ENCODE measurements at regions of chr12 and their contacts with region 1.

Region 1: GRCh38 chr12:6278439-6279255 is 31.8 kb upstream of the PLEKHG6 start:
- DNase-seq: peak; percentile 85
- ATAC-seq: peak; percentile 65
- H3K4me3 Mint-ChIP-seq: peak overlapping the region; percentile 76
- H3K27ac Mint-ChIP-seq: no peak overlapping the region
- H3K4me1 Mint-ChIP-seq: peaks cover 59% of the 10 kb centered on the region
- H3K27me3 Mint-ChIP-seq: peaks cover 5% of the 10 kb centered on the region
- CTCF ChIP-seq: peak; percentile 99

Region 2: GRCh38 chr12:6067152-6067916 is 211.3 kb before region 1 on chr12:
- CTCF ChIA-PET with region 1: interaction called, 84 read pairs
- POLR2A ChIA-PET with region 1: no interaction called
- DNase-seq: peak; percentile 75
- ATAC-seq: peak; percentile 60
- H3K4me3 Mint-ChIP-seq: no peak overlapping the region
- H3K27ac Mint-ChIP-seq: no peak overlapping the region; the same call in 1 of the 2 replicates
- H3K4me1 Mint-ChIP-seq: peaks cover 18% of the 10 kb centered on the region
- H3K27me3 Mint-ChIP-seq: no peaks in the 10 kb centered on the region
- CTCF ChIP-seq: no peak

Region 3: DNA sequence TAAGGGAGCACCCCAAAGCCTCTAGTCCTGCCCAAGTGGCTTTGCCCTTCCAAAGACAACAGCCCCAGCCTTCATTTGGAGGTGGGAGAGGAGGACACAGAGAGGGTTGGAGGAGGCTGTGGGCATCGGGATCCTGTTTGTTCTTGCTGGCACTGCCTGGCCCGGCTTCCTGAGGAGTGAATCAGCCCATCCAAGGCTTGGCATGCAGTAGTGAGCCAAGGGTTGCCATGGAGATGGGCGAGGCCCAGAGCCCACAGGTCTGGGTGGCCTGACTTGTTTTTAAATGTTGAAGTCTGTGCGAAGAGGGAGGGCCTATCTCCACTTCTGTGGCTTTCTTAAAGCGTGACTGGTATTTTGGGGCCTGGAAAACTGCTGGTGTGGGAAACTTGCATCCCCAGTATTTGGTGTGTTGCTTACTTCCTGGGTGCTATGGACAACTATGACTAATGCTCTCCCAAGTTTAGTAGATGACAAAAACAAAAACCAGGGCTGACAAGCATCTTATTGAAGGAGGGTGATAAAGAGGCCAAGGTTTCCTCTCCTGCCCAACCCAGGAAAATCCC is 62.6 kb before region 1 on chr12:
- CTCF ChIA-PET with region 1: interaction called, 70 read pairs
- POLR2A ChIA-PET with region 1: interaction called, 3 read pairs
- DNase-seq: peak; percentile 47
- ATAC-seq: peak; percentile 11
- H3K4me3 Mint-ChIP-seq: peak overlapping the region; percentile 58
- H3K27ac Mint-ChIP-seq: peak overlapping the region; percentile 100
- H3K4me1 Mint-ChIP-seq: peaks cover 99% of the 10 kb centered on the region
- H3K27me3 Mint-ChIP-seq: no peaks in the 10 kb centered on the region
- CTCF ChIP-seq: no peak

Region 4: DNA sequence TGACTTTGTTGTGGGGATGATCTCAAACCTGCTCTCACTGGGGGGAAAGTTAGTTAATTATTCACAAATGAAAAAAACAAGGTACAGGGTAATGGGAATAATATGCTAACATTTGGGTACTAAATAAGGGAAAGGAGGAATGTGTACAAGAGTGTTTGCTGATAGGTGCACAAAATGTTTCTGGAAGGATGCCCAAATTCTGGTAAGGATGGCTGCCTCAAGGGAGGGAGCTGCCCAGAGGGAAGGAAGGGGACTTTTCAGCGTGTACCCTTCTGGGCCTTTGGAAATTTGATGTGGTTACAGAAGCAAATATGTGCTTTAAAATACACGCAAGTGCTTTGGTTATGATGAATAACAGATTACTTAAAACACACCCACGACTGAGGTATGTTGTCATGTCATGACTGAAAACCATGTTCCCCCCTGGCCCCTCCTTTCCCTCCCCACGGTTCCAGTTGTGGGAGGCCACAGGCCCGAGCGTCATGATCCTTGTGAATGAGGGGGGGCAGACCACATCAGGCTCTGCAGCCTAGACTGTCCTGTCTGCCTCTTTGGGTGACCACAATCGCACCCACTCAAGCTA is 11.4 kb before region 1 on chr12:
- CTCF ChIA-PET with region 1: interaction called, 35 read pairs
- POLR2A ChIA-PET with region 1: no interaction called
- DNase-seq: no peak
- ATAC-seq: no peak
- H3K4me3 Mint-ChIP-seq: no peak overlapping the region
- H3K27ac Mint-ChIP-seq: no peak overlapping the region
- H3K4me1 Mint-ChIP-seq: peaks cover 48% of the 10 kb centered on the region
- H3K27me3 Mint-ChIP-seq: peaks cover 3% of the 10 kb centered on the region; the same call in 1 of the 2 replicates
- CTCF ChIP-seq: no peak

Region 5: DNA sequence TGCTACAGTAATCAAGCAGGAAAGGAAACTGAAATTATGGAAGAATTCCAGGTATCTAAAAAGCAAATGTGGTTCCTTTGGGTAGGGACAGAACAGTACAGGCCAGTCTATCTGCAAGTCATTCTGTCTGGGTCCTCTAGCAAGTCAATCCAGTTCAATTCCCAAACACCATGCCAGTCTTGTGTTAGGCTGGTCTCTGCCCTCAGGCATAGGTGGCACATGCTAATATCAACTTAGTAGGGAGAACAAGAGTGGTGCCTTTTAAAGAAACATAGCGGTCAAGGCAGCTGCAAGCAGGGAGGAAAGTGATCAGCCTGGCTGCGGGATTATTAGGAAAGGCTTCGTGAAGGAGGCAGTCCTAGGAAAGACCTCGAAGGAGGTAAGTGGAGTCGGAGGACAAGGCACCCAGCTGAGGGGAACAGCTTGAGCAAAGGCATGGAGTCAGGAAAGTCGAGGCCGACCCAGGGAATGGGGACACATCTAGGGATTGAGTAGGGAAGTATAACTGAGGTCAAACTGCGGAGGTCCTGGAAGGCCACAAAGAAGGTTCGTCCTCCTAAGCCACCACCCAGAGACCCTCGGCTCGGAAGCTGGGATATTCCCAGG is 28.1 kb after region 1 on chr12:
- CTCF ChIA-PET with region 1: interaction called, 13 read pairs
- POLR2A ChIA-PET with region 1: no interaction called
- DNase-seq: no peak
- ATAC-seq: no peak
- H3K4me3 Mint-ChIP-seq: no peak overlapping the region
- H3K27ac Mint-ChIP-seq: no peak overlapping the region
- H3K4me1 Mint-ChIP-seq: peaks cover 11% of the 10 kb centered on the region
- H3K27me3 Mint-ChIP-seq: peaks cover 14% of the 10 kb centered on the region
- CTCF ChIP-seq: no peak

Measured in WTC11 (cell line).